OCI-LY7 (cell line): ENCODE measurements at regions of chr4 and their contacts with region 1.

Region 1: GRCh38 chr4:113394730-113395530 is 345.5 kb downstream of the ANK2 start:
- DNase-seq: peak; percentile 85
- H3K4me3 ChIP-seq: no peak overlapping the region
- H3K27ac ChIP-seq: no peak overlapping the region
- H3K4me1 ChIP-seq: no peaks in the 10 kb centered on the region
- CTCF ChIP-seq: peak; percentile 94

Region 2: GRCh38 chr4:113406723-113407016 is 11.7 kb after region 1 on chr4:
- CTCF ChIA-PET with region 1: no interaction called
- POLR2A ChIA-PET with region 1: no interaction called
- intact Hi-C with region 1: no loop called
- DNase-seq: no peak
- H3K4me3 ChIP-seq: no peak overlapping the region
- H3K27ac ChIP-seq: no peak overlapping the region
- H3K4me1 ChIP-seq: peaks cover 10% of the 10 kb centered on the region
- CTCF ChIP-seq: no peak

Region 3: DNA sequence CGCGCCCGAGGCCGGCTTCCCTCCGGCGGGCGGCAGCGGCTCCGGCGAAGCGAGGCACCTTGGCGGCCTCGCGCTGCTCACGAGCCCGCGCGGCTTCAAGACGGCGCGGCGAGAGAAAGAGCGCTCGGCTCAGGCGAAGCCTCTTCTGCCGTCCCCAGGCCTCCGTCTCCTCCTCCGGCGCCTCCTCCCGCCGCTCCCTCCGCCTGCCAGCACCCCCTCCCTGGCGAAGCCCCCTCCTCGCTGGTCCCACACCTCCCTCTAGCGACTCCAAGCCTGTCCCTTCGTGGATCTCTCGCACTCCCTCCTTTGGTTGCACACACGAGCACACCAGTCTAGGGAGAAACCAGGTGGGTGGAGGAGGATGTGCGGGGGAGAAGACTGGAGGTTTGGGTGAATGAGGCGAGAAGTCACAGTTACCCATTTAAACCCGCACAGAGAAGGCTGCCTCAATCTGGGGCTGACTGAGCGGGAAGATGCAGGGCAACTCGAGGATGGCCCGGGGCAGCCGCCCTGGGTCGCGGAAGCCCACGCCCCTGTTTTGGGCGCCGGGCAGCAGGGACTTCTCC is 366.8 kb after region 1 on chr4 and contains the start of gene CAMK2D:
- CTCF ChIA-PET with region 1: no interaction called
- POLR2A ChIA-PET with region 1: no interaction called
- intact Hi-C with region 1: loop called (anchors 2 kb)
- DNase-seq: peak; percentile 91
- H3K4me3 ChIP-seq: peak within 1 kb of the TSS; percentile 89
- H3K27ac ChIP-seq: peak within 1 kb of the TSS; percentile 99
- H3K4me1 ChIP-seq: peaks cover 27% of the 10 kb centered on the region
- CTCF ChIP-seq: peak; percentile 76
- total RNA-seq, gene CAMK2D: 109 and 120 TPM in 2 replicates

Region 4: GRCh38 chr4:113952452-113953029 is 557.6 kb after region 1 on chr4:
- CTCF ChIA-PET with region 1: no interaction called
- POLR2A ChIA-PET with region 1: no interaction called
- intact Hi-C with region 1: loop called (anchors 2 kb)
- DNase-seq: peak; percentile 50
- H3K4me3 ChIP-seq: no peak overlapping the region
- H3K27ac ChIP-seq: no peak overlapping the region
- H3K4me1 ChIP-seq: no peaks in the 10 kb centered on the region
- CTCF ChIP-seq: peak; percentile 85

Region 5: GRCh38 chr4:114180481-114180880 is 785.6 kb after region 1 on chr4:
- CTCF ChIA-PET with region 1: no interaction called
- POLR2A ChIA-PET with region 1: no interaction called
- intact Hi-C with region 1: loop called (anchors 5 kb)
- DNase-seq: peak; percentile 30
- H3K4me3 ChIP-seq: no peak overlapping the region
- H3K27ac ChIP-seq: no peak overlapping the region
- H3K4me1 ChIP-seq: no peaks in the 10 kb centered on the region
- CTCF ChIP-seq: peak; percentile 71

Region 6: DNA sequence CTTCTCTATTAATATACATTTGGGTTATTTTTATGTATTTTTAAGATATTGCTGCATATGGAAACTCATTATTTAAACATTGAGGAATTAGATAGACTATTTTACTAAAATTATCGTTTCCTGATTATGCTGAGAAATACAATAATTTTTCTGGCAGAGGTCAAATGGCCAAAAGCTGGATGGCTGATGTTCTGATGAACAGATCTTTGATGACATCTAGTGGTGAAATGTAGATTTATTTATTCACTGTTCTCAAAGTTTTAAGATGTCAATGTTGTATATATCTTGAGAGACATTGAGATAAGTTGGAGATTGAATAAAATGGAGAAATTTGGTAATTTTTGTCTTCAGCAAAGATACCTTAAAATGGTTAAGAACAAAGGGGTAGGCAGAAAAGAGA is 1299.8 kb after region 1 on chr4:
- CTCF ChIA-PET with region 1: no interaction called
- POLR2A ChIA-PET with region 1: no interaction called
- intact Hi-C with region 1: loop called (anchors 10 kb)
- DNase-seq: peak; percentile 61
- H3K4me3 ChIP-seq: no peak overlapping the region
- H3K27ac ChIP-seq: no peak overlapping the region
- H3K4me1 ChIP-seq: no peaks in the 10 kb centered on the region
- CTCF ChIP-seq: peak; percentile 89